ENCODE measurements at regions of chr22 and their contacts with region 1.

Region 1: GRCh38 chr22:22884010-22884887 is 3.4 kb upstream of the IGLL5 start:
- DNase-seq: peak; percentile 85
- H3K4me3 Mint-ChIP-seq: no peak overlapping the region
- H3K27ac Mint-ChIP-seq: no peak overlapping the region
- H3K4me1 Mint-ChIP-seq: peaks cover 14% of the 10 kb centered on the region
- H3K27me3 Mint-ChIP-seq: peaks cover 26% of the 10 kb centered on the region

Region 2: GRCh38 chr22:22753526-22754267 is 130.6 kb before region 1 on chr22:
- CTCF ChIA-PET with region 1: interaction called, 22 read pairs
- POLR2A ChIA-PET with region 1: no interaction called
- DNase-seq: peak; percentile 85
- H3K4me3 Mint-ChIP-seq: no peak overlapping the region
- H3K27ac Mint-ChIP-seq: peak overlapping the region; percentile 76
- H3K4me1 Mint-ChIP-seq: peaks cover 8% of the 10 kb centered on the region
- H3K27me3 Mint-ChIP-seq: no peaks in the 10 kb centered on the region

Region 3: DNA sequence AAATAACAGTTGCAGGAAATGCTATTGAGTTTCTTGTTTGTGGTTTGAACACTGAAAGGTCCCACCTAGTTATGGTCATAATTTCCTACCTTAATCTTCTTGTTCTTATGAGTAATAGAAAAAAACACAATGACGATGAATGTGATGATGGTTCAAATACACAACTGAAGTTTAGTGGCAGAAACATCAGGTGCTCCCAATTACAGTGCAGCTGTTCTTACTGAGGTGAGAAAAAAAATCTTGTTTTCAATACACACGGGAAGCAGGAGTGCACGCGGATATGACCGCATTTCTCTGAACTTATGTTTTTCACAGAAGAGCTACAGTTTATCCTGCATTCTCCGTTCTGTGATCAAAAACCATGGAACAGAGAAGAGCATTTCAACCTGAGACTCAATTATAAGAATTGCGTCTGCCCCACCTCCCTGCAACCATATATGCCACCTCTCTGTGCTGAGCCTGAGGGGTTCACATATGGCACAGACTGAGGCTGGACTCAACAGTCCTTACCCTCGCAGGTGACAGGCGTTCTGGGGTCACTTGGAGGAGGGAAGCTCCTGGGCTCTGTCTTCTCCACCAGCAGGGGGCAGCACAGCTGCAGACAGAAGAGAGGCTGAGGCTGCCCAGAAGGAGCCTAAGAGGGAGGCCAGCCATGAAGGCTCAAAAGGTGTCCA is 96.3 kb before region 1 on chr22:
- CTCF ChIA-PET with region 1: interaction called, 41 read pairs
- POLR2A ChIA-PET with region 1: no interaction called
- DNase-seq: peak; percentile 78
- H3K4me3 Mint-ChIP-seq: no peak overlapping the region
- H3K27ac Mint-ChIP-seq: no peak overlapping the region
- H3K4me1 Mint-ChIP-seq: peaks cover 41% of the 10 kb centered on the region
- H3K27me3 Mint-ChIP-seq: peaks cover 12% of the 10 kb centered on the region

Region 4: GRCh38 chr22:22802339-22802970 is 81.8 kb before region 1 on chr22:
- CTCF ChIA-PET with region 1: interaction called, 11 read pairs
- POLR2A ChIA-PET with region 1: no interaction called
- DNase-seq: peak; percentile 79
- H3K4me3 Mint-ChIP-seq: no peak overlapping the region
- H3K27ac Mint-ChIP-seq: peak overlapping the region; percentile 73
- H3K4me1 Mint-ChIP-seq: peaks cover 41% of the 10 kb centered on the region
- H3K27me3 Mint-ChIP-seq: peaks cover 11% of the 10 kb centered on the region

Region 5: DNA sequence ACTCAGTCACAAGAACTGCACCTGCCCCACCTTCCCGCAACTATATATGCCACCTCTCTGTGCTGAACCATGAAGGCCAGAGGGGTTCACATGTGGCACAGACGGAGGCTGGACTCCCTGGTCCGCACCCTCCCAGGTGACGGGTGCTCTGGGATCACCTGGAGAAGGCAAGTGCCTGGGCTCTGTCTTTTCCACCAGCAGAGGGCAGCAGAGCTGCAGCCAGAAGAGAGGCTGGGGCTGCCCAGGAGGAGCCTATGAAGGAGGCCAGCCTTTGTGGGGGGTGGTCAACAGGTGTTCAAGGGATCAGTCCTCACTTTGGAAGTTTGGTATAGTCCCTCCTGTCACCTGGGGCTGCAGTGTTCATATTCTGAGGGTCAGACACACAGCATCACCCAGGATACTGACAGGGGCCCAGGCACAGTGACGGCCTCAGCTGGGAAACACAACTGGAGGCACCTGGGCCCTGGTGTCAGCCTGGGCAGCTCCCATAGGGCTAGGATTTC is 35.8 kb before region 1 on chr22:
- CTCF ChIA-PET with region 1: interaction called, 11 read pairs
- POLR2A ChIA-PET with region 1: no interaction called
- DNase-seq: peak; percentile 79
- H3K4me3 Mint-ChIP-seq: no peak overlapping the region
- H3K27ac Mint-ChIP-seq: no peak overlapping the region
- H3K4me1 Mint-ChIP-seq: peaks cover 29% of the 10 kb centered on the region
- H3K27me3 Mint-ChIP-seq: peaks cover 36% of the 10 kb centered on the region

Region 6: GRCh38 chr22:22855617-22856308 is 28.5 kb before region 1 on chr22:
- CTCF ChIA-PET with region 1: interaction called, 10 read pairs
- POLR2A ChIA-PET with region 1: interaction called, 5 read pairs
- DNase-seq: peak; percentile 30
- H3K4me3 Mint-ChIP-seq: no peak overlapping the region
- H3K27ac Mint-ChIP-seq: peak overlapping the region; percentile 43
- H3K4me1 Mint-ChIP-seq: no peaks in the 10 kb centered on the region
- H3K27me3 Mint-ChIP-seq: peaks cover 39% of the 10 kb centered on the region

Region 7: DNA sequence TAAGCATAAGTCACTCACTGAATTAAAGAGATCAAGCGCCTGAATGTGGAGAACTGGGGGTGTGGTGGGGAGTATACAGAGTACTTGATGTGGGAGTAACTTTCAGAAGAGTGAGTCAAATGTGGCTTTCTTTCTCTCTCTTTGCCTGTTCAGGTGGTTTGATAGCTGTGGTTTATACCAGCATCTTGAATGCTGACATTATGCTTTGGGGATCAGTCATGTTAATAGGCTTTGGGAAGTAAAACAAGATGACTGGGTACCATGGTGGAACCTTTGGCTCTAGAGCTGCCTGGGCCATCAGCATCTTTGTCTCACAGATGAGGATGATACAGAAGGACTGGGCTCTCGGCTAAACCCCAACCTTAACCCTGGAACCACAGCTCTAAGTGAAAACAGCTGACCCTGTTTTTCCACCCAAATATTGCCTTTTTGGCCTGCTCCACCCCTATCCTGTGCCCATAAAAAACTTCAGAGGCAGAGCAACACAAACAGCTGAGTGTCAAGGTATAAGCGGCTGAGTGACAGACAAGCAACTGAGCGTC is 127.9 kb after region 1 on chr22:
- CTCF ChIA-PET with region 1: no interaction called
- POLR2A ChIA-PET with region 1: no interaction called
- DNase-seq: peak; percentile 67
- H3K4me3 Mint-ChIP-seq: no peak overlapping the region
- H3K27ac Mint-ChIP-seq: peak overlapping the region; percentile 0
- H3K4me1 Mint-ChIP-seq: peaks cover 30% of the 10 kb centered on the region
- H3K27me3 Mint-ChIP-seq: peaks cover 41% of the 10 kb centered on the region